ENCODE measurements at regions of chr1 and their contacts with region 1.

Region 1: DNA sequence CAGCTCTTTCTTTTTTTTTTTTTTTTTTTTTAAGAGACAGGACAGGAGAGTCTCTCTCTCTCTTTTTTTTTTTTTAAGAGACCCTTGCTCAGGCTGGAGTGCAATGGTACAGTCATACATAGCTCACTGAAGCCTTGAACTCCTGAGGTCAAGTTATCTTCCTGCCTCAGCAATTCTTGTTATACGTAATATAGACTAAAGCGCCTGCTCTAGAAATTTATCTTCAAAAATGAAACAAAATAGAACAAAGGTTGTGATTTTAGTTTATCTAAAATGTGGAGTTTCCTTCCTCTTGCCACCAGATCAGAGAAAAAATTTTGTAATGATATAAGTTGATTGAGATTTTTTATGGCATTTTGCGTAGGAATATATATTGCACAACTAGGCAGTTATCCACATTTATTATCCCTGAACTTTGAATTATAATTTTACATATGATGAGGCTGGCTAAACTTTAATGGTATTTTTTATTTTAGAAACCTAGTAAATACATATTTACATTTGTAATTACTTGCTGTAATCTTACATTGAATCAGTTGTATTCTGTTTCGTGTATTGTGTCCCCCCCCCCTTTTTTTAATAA is 44.2 kb downstream of the MTF2 start:
- DNase-seq: no peak
- H3K4me3 ChIP-seq: no peak overlapping the region
- H3K4me3 Mint-ChIP-seq: no peak overlapping the region
- H3K27ac ChIP-seq: no peak overlapping the region
- H3K27ac Mint-ChIP-seq: no peak overlapping the region
- H3K4me1 ChIP-seq: no peaks in the 10 kb centered on the region
- H3K4me1 Mint-ChIP-seq: peaks cover 7 to 22% (median 9%) of the 10 kb centered on the region in 3 donors
- H3K27me3 ChIP-seq: no peaks in the 10 kb centered on the region
- H3K27me3 Mint-ChIP-seq: no peaks in the 10 kb centered on the region

Region 2: GRCh38 chr1:93155335-93155734 is 32.0 kb after region 1 on chr1:
- CTCF ChIA-PET with region 1: no interaction called
- POLR2A ChIA-PET with region 1: no interaction called
- DNase-seq: no peak
- H3K4me3 ChIP-seq: no peak overlapping the region
- H3K4me3 Mint-ChIP-seq: no peak overlapping the region
- H3K27ac ChIP-seq: no peak overlapping the region
- H3K27ac Mint-ChIP-seq: peak overlapping the region in 4 of 8 donors; percentile 36 to 66 (median 56)
- H3K4me1 ChIP-seq: no peaks in the 10 kb centered on the region
- H3K4me1 Mint-ChIP-seq: peaks cover 15 to 29% (median 23%) of the 10 kb centered on the region in 3 donors
- H3K27me3 ChIP-seq: no peaks in the 10 kb centered on the region
- H3K27me3 Mint-ChIP-seq: no peaks in the 10 kb centered on the region

Region 3: DNA sequence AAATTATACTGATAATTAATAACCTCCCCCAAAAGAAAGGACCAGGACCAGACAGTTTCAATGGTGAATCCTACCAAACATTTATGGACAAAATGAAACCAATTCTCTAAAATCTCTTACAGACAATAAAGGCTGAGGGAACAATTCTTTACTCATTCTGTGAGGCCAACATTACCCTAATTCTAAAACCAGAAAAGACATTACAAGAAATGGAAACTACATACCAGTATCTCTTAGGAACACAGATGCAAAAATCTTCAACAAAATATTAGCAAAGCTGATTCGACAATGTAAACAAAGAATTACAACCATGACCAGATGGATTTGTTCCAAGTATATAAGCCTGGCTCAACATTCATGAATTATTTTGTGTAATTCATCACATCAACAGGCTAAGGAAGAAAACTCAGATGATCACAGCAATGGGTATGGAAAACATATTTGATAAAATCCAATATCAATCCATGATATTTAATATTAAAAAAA is 48.3 kb after region 1 on chr1:
- CTCF ChIA-PET with region 1: no interaction called
- POLR2A ChIA-PET with region 1: interaction called, 17 read pairs
- DNase-seq: no peak
- H3K4me3 ChIP-seq: peak overlapping the region; percentile 37
- H3K4me3 Mint-ChIP-seq: peak overlapping the region; percentile 78 to 87 (median 83)
- H3K27ac ChIP-seq: no peak overlapping the region
- H3K27ac Mint-ChIP-seq: peak overlapping the region; percentile 15 to 90 (median 72)
- H3K4me1 ChIP-seq: peaks cover 43% of the 10 kb centered on the region
- H3K4me1 Mint-ChIP-seq: peaks cover 72 to 87% (median 82%) of the 10 kb centered on the region in 3 donors
- H3K27me3 ChIP-seq: no peaks in the 10 kb centered on the region
- H3K27me3 Mint-ChIP-seq: no peaks in the 10 kb centered on the region

Measured in CD8-positive, alpha-beta memory T cell (primary cell).